HepG2 (cell line): ENCODE measurements at regions of chr11 and their contacts with region 1.

Region 1: GRCh38 chr11:18012863-18013781 is at the start of gene SERGEF:
- DNase-seq: peak; percentile 86
- ATAC-seq: peak; percentile 93
- H3K4me3 ChIP-seq: peak within 1 kb of the TSS; percentile 75 to 95 (median 92)
- H3K27ac ChIP-seq: peak within 1 kb of the TSS; percentile 70
- H3K4me1 ChIP-seq: peaks cover 47% of the 10 kb centered on the region
- H3K27me3 ChIP-seq: no peaks in the 10 kb centered on the region; a peak in 1 of 5 replicates
- CTCF ChIP-seq: peak; percentile 12; the same call in 1 of the 2 replicates
- EP300 ChIP-seq: peak in 1 of 2 experiments; percentile 16; a peak in 1 of 4 replicates
- POLR2A ChIP-seq: peak; percentile 69 to 87
- RAD21 ChIP-seq: peak; percentile 55
- total RNA-seq, gene SERGEF: 114 and 117 TPM in 2 replicates

Region 2: GRCh38 chr11:17921659-17922415 is 91.3 kb before region 1 on chr11:
- CTCF ChIA-PET with region 1: no interaction called
- POLR2A ChIA-PET with region 1: no interaction called
- in situ Hi-C with region 1: no loop called
- intact Hi-C with region 1: no loop called
- DNase-seq: no peak
- ATAC-seq: no peak
- H3K4me3 ChIP-seq: no peak overlapping the region
- H3K27ac ChIP-seq: no peak overlapping the region
- H3K4me1 ChIP-seq: peaks cover 13% of the 10 kb centered on the region
- H3K27me3 ChIP-seq: no peaks in the 10 kb centered on the region
- CTCF ChIP-seq: no peak
- EP300 ChIP-seq: no peak
- POLR2A ChIP-seq: no peak
- RAD21 ChIP-seq: no peak

Region 3: DNA sequence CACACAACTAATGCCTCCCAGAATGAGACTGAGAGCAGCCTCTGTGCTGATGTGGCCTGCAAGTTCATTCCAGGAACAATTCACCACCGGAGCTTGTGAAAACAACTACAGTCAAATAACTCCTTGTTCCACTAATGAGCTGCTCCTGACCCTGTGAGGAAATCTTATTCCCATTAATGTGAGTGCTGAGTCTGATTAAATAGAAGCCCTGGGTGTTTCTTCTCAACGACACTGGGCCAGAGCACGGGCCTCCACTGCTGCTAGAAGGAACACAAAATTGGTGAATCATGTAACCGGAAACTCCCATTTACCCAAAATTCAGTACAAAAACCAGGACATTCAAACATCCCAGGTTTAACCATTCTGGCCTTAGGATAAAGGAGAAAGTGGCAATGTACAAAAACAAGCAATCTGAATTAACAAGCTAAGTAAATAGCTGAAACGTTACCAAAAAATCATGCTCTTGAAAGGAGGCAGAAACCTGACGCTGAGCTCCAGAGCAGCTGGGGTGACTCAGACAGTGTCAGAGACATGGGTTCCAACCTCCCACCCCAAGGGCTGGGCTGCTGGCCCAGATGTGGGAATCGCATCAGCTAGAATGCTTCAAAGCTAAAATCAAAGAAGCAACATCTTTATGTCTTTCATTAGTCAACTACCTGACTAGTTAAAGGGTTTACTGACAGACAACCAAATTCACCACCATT is 27.0 kb before region 1 on chr11:
- CTCF ChIA-PET with region 1: no interaction called
- POLR2A ChIA-PET with region 1: interaction called, 19 read pairs
- in situ Hi-C with region 1: no loop called
- intact Hi-C with region 1: no loop called
- DNase-seq: no peak
- ATAC-seq: peak; percentile 34
- H3K4me3 ChIP-seq: peak overlapping the region in 1 of 3 experiments; percentile 34; a peak in 2 of 6 replicates
- H3K27ac ChIP-seq: peak overlapping the region; percentile 79
- H3K4me1 ChIP-seq: peaks cover 65% of the 10 kb centered on the region
- H3K27me3 ChIP-seq: no peaks in the 10 kb centered on the region
- CTCF ChIP-seq: no peak
- EP300 ChIP-seq: no peak
- POLR2A ChIP-seq: no peak
- RAD21 ChIP-seq: no peak

Region 4: DNA sequence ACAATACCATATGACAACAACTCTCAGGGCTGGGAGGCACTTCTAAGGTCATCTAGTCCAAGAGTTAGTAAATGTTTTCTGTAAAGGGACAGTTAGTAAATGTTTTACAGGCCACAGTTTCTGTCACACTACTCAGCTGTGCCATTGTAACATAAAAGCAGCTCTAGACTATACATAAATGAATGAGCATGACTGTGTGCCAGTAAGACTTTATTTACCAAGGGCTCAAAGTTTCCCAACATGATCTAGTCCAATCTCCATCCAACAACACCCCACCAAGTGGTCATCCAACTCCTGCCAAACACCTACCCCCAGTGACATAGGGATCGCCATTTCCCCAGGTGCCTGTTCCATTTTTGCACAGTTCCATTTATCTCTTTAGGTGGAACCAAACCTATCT is 12.4 kb before region 1 on chr11:
- CTCF ChIA-PET with region 1: no interaction called
- POLR2A ChIA-PET with region 1: interaction called, 25 read pairs
- in situ Hi-C with region 1: no loop called
- intact Hi-C with region 1: no loop called
- DNase-seq: peak; percentile 95
- ATAC-seq: peak; percentile 99
- H3K4me3 ChIP-seq: peak overlapping the region in 1 of 3 experiments; percentile 21; a peak in 1 of 6 replicates
- H3K27ac ChIP-seq: peak overlapping the region; percentile 79
- H3K4me1 ChIP-seq: peaks cover 54% of the 10 kb centered on the region
- H3K27me3 ChIP-seq: no peaks in the 10 kb centered on the region
- CTCF ChIP-seq: peak; percentile 47
- EP300 ChIP-seq: peak in 1 of 2 experiments; percentile 75; a peak in 2 of 4 replicates
- POLR2A ChIP-seq: no peak
- RAD21 ChIP-seq: no peak

Region 5: GRCh38 chr11:18105802-18106574 is 92.9 kb after region 1 on chr11 and contains the start of gene SAAL1:
- CTCF ChIA-PET with region 1: interaction called, 3 read pairs
- POLR2A ChIA-PET with region 1: interaction called, 4 read pairs
- in situ Hi-C with region 1: loop called (anchors 5 kb)
- intact Hi-C with region 1: loop called (anchors 2 kb)
- DNase-seq: peak; percentile 73
- ATAC-seq: peak; percentile 99
- H3K4me3 ChIP-seq: peak within 1 kb of the TSS; percentile 85 to 98 (median 96)
- H3K27ac ChIP-seq: peak within 1 kb of the TSS; percentile 52
- H3K4me1 ChIP-seq: peaks cover 21% of the 10 kb centered on the region
- H3K27me3 ChIP-seq: no peaks in the 10 kb centered on the region; a peak in 1 of 5 replicates
- CTCF ChIP-seq: peak; percentile 98
- EP300 ChIP-seq: no peak
- POLR2A ChIP-seq: peak; percentile 38 to 88; a peak in 3 of 4 replicates
- RAD21 ChIP-seq: peak; percentile 79
- total RNA-seq, gene SAAL1: 45.7 and 46.0 TPM in 2 replicates